Heart left ventricle (tissue), 16 donors: ENCODE measurements at regions of chr10 and their contacts with region 1.

Region 1: GRCh38 chr10:21495752-21496342 is 29.6 kb downstream of the SKIDA1 start:
- DNase-seq: peak; percentile 81 to 92 (median 86)
- ATAC-seq: peak; percentile 66 to 91 (median 82)
- H3K4me3 ChIP-seq: peak overlapping the region; percentile 61 to 86 (median 78)
- H3K27ac ChIP-seq: peak overlapping the region in 11 of 12 donors; percentile 68 to 91 (median 81)
- H3K4me1 ChIP-seq: peaks cover 0 to 31% (median 8%) of the 10 kb centered on the region in 12 donors
- H3K27me3 ChIP-seq: peaks cover 0 to 54% (median 0%) of the 10 kb centered on the region in 9 donors
- CTCF ChIP-seq: peak; percentile 96 to 100 (median 99)
- POLR2A ChIP-seq: no peak

Region 2: DNA sequence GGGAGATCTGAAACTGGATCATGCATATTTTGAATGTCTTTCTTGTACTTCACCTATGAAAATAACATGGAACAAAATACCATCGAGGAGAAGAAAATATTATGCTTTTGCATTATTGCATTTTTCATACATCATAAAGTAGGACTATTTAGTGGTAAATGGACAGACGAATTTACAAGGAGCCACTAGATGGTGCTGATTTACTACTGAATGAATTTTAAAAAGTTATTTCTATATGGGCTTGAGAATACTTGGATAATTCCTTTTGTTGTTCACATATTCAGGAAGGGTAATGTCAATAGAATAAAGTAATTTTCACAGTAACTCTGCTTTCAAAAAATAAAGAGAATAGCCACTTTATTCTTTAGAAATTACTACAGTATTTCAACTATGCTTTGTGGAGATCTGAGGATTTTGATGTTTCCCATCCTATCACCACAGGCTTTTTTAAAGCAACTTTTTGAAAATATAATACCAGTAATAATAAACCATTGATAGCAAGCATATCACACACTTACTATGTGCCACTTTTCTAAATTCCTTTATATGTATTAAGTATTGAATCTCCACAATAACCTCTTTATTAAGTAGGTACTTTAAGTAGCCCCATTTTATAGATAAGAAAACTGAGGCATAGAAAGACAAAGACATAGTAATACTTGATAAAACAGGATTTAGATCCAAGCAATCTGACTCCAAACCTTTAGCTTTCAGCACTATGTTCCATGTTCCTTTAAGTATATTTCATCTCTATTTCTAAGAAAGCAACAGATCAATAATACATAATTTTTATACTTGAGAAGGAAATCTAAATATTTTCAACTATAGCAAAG is 637.3 kb before region 1 on chr10:
- intact Hi-C with region 1: loop called in 1 of 10 experiments (anchors 5 kb)
- DNase-seq: no peak
- ATAC-seq: no peak
- H3K4me3 ChIP-seq: no peak overlapping the region
- H3K27ac ChIP-seq: no peak overlapping the region
- H3K4me1 ChIP-seq: peaks cover 0 to 22% (median 3%) of the 10 kb centered on the region in 12 donors
- H3K27me3 ChIP-seq: no peaks in the 10 kb centered on the region
- CTCF ChIP-seq: peak; percentile 18 to 58 (median 44)
- POLR2A ChIP-seq: no peak

Region 3: DNA sequence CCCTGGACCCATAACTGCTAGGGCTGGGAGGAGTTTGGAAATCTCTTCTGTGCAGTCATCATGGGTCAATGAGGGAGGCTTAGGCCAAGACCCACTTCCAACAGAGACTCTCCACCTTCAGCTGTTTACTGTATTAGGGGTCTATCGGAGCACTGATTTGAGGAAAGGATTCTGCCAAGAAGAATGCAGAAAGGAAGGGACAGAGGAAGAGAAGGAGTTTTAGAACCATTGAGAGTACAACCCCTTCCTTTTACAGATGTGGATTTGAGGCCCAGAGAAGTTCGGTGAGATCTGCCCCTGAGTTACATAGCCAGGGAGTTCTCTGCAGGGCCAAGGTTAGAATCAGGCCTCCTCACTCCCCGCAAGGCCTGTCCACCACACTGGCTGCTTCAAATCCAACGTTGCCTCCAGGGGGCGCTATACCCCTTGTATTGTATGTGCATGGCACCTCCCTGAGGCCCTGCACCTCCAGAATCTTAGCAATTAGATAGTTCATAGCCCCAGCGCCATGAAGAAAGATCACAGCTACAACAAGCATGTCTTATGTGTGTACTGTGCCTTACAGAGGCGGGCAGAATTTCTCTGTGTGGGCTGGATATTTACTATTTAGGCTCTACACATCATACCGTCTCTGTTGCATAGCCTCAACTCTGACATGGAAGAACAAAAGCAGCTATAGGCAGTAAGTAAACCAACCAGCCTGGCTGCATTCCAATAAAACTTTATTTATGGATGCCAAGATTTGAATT is 217.2 kb before region 1 on chr10:
- intact Hi-C with region 1: loop called (anchors 1 to 5 kb)
- DNase-seq: peak; percentile 91 to 96 (median 95)
- ATAC-seq: peak; percentile 95 to 99 (median 98)
- H3K4me3 ChIP-seq: no peak overlapping the region
- H3K27ac ChIP-seq: peak overlapping the region in 3 of 12 donors; percentile 13 to 51 (median 14)
- H3K4me1 ChIP-seq: peaks cover 0 to 6% (median 3%) of the 10 kb centered on the region in 12 donors
- H3K27me3 ChIP-seq: no peaks in the 10 kb centered on the region
- CTCF ChIP-seq: peak; percentile 81 to 91 (median 82)
- POLR2A ChIP-seq: no peak

Region 4: GRCh38 chr10:21336476-21337170 is 159.2 kb before region 1 on chr10:
- intact Hi-C with region 1: loop called in 2 of 10 experiments (anchors 2 to 5 kb)
- DNase-seq: peak; percentile 59 to 82 (median 63)
- ATAC-seq: peak; percentile 75 to 91 (median 82)
- H3K4me3 ChIP-seq: no peak overlapping the region
- H3K27ac ChIP-seq: peak overlapping the region in 9 of 12 donors; percentile 18 to 68 (median 46)
- H3K4me1 ChIP-seq: peaks cover 0 to 25% (median 14%) of the 10 kb centered on the region in 12 donors
- H3K27me3 ChIP-seq: no peaks in the 10 kb centered on the region
- CTCF ChIP-seq: peak in 5 of 12 donors; percentile 9 to 17 (median 16)
- POLR2A ChIP-seq: no peak

Region 5: DNA sequence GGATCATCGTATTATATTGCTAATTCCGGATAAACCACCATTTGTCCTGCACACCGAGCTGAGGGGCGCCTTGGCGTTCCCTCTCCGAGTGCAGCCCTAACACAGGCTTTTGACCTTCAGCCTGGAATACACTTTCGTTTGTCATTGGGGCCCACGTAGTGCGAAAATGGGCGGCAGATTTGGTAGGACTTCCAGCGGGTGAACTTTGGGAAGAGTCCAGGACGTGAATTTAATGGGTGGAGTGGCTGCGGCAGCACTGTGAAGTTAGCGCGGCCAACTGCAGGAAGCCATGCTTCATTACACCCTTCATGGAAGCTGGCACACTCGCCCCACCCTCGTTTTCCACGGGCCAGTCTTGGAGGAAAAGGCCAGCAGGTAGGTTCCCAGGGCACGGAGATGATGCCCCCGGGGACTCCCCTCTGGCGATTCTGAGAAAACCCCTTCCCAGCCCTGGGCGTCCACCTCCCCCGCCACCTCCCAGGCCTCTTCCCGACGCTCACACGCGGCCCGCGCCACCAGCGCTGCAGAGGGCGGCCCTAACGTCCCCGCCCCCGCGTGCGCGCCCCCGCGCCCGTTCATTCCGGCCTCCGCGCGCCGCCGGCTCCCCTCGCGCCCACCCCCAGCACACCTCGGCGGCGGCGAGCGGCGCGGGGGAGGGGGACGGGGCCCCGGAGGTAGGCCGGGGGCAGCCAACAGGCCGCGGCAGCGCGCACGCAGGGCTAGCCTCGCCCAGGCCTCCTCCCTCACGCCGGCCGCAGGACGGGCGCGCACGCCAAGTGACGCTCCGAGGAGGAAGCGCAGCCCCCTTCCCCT is 37.8 kb after region 1 on chr10 and contains the start of gene MLLT10:
- intact Hi-C with region 1: loop called in 6 of 10 experiments (anchors 1 to 5 kb)
- DNase-seq: peak; percentile 96 to 98 (median 97)
- ATAC-seq: peak; percentile 86 to 97 (median 94)
- H3K4me3 ChIP-seq: peak within 1 kb of the TSS; percentile 54 to 88 (median 78)
- H3K27ac ChIP-seq: peak within 1 kb of the TSS; percentile 89 to 99 (median 97)
- H3K4me1 ChIP-seq: peaks cover 0 to 31% (median 22%) of the 10 kb centered on the region in 12 donors
- H3K27me3 ChIP-seq: no peaks in the 10 kb centered on the region
- CTCF ChIP-seq: peak in 7 of 12 donors; percentile 17 to 44 (median 21)
- POLR2A ChIP-seq: peak in 1 of 2 donors; percentile 76
- total RNA-seq, gene MLLT10: 17.1 to 30.7 (median 25.2) TPM

Region 6: GRCh38 chr10:21953585-21954057 is 457.8 kb after region 1 on chr10:
- intact Hi-C with region 1: loop called (anchors 2 to 10 kb)
- DNase-seq: no peak
- ATAC-seq: peak in 3 of 4 donors; percentile 42 to 69 (median 58)
- H3K4me3 ChIP-seq: no peak overlapping the region
- H3K27ac ChIP-seq: no peak overlapping the region
- H3K4me1 ChIP-seq: peaks cover 0 to 18% (median 3%) of the 10 kb centered on the region in 12 donors
- H3K27me3 ChIP-seq: no peaks in the 10 kb centered on the region
- CTCF ChIP-seq: peak; percentile 32 to 60 (median 40)
- POLR2A ChIP-seq: no peak